Tibial artery (tissue), 4 donors: ENCODE measurements at regions of chr11 and their contacts with region 1.

Region 1: GRCh38 chr11:134139873-134140331 is 71.0 kb downstream of the JAM3 start:
- DNase-seq: peak in 1 of 2 donors; percentile 72
- H3K4me3 ChIP-seq: no peak overlapping the region
- H3K27ac ChIP-seq: peak overlapping the region; percentile 54 to 55
- H3K4me1 ChIP-seq: peaks cover 0 to 7% (median 4%) of the 10 kb centered on the region in 4 donors
- H3K27me3 ChIP-seq: no peaks in the 10 kb centered on the region
- CTCF ChIP-seq: peak; percentile 84 to 93

Region 2: DNA sequence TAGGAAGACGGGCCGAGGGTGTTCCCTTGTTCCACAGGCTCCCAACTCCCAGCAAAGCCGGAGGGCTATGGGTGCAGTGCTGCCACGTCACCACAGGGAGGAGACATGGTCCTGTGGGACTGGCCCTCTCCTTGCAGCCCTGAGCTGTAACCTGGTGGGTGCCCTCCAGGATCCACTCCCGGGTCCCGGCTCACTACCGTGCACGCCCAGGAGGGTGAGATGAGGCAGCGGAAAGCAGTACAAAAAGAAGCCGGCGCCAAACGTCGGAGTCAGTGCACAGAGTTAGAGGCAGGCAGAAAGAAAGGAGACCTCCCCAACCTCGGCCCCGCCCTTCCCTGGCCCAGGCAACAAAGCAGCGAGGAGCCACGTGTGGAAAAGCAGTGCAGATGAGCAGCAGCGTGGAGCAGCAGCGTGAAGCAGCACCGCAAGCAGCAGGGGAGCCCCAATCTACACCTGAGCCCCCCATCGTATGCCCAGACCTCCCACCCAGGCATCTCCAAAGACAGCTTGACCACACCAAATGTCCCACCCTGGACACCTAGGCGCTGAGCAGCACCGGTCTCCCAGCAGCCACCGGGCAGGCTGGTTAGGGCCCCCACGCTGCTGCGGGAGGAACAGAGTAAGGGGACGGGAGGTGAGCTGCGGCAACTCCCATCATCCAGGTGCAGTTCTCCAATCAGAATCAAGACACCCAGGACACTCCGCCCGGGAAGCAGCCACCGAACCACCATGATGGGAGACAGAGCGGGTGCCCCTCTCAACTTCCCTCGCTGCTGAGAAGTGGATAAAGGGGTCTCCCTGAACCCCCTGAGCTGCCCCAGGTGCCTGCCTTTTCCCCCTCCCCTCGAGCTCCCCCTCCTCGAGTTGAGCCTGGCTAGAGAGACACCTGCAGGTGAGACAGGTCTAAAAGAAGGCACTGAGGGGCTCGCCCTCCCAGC is 211.9 kb before region 1 on chr11:
- intact Hi-C with region 1: loop called (anchors 5 kb)
- DNase-seq: peak; percentile 52 to 81
- H3K4me3 ChIP-seq: no peak overlapping the region
- H3K27ac ChIP-seq: peak overlapping the region in 1 of 2 donors; percentile 29
- H3K4me1 ChIP-seq: peaks cover 0 to 16% (median 10%) of the 10 kb centered on the region in 4 donors
- H3K27me3 ChIP-seq: no peaks in the 10 kb centered on the region
- CTCF ChIP-seq: peak; percentile 79 to 86

Region 3: GRCh38 chr11:134050541-134051383 is 89.1 kb before region 1 on chr11:
- intact Hi-C with region 1: loop called (anchors 2 kb)
- DNase-seq: peak; percentile 48 to 86
- H3K4me3 ChIP-seq: peak overlapping the region; percentile 26 to 34
- H3K27ac ChIP-seq: no peak overlapping the region
- H3K4me1 ChIP-seq: peaks cover 0 to 37% (median 22%) of the 10 kb centered on the region in 4 donors
- H3K27me3 ChIP-seq: no peaks in the 10 kb centered on the region
- CTCF ChIP-seq: peak; percentile 95 to 97

Region 4: GRCh38 chr11:134068829-134069425 is 71.0 kb before region 1 on chr11 and contains the start of gene JAM3:
- intact Hi-C with region 1: loop called (anchors 5 kb)
- DNase-seq: peak; percentile 93 to 97
- H3K4me3 ChIP-seq: peak within 1 kb of the TSS; percentile 80 to 95
- H3K27ac ChIP-seq: peak within 1 kb of the TSS; percentile 92 to 93
- H3K4me1 ChIP-seq: peaks cover 0 to 23% (median 11%) of the 10 kb centered on the region in 4 donors
- H3K27me3 ChIP-seq: no peaks in the 10 kb centered on the region
- CTCF ChIP-seq: no peak